Activated naive CD4-positive, alpha-beta T cell treated with anti-CD3 and anti-CD28 coated beads for 36 hours (primary cell): ENCODE measurements at regions of chr19 and their contacts with region 1.

Region 1: DNA sequence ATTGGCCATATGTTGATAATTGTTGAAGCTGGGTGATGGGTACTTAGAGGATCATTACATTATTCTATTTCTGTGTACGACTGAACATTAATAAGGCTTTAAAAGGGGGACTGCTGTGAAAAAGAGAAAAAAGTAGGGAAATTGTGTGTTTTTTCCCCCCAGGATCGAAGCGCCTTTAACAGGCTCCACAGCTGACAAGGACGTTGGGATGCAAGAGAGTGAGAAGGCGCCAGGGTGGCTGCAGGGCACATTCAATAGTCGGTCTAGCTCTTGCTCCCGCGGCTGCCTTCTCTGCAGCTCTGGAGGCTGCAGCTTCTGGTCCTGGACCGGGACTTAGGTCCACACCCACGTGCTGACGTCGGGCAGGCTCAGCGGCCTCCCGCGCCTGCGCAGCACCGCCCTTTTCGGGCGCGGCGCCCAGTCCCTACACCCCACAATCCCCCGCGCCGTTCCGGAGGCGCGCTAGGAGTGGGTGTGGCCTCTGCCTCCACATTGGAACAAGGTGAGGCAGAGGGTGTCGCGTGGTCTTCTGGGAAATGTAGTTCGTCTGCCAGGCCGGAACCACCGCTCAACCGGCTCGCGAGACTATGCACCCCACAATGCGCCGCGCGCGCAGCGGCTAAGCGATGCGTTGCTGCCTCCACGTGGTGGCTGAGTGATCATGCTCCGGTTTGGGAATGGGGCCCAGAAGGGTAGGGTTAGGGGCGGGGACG is 4.9 kb upstream of the LRFN3 start:
- DNase-seq: peak; percentile 100
- H3K4me3 Mint-ChIP-seq: peak overlapping the region; percentile 81
- H3K27ac Mint-ChIP-seq: peak overlapping the region; percentile 93
- H3K4me1 Mint-ChIP-seq: peaks cover 32% of the 10 kb centered on the region
- H3K27me3 Mint-ChIP-seq: no peaks in the 10 kb centered on the region

Region 2: DNA sequence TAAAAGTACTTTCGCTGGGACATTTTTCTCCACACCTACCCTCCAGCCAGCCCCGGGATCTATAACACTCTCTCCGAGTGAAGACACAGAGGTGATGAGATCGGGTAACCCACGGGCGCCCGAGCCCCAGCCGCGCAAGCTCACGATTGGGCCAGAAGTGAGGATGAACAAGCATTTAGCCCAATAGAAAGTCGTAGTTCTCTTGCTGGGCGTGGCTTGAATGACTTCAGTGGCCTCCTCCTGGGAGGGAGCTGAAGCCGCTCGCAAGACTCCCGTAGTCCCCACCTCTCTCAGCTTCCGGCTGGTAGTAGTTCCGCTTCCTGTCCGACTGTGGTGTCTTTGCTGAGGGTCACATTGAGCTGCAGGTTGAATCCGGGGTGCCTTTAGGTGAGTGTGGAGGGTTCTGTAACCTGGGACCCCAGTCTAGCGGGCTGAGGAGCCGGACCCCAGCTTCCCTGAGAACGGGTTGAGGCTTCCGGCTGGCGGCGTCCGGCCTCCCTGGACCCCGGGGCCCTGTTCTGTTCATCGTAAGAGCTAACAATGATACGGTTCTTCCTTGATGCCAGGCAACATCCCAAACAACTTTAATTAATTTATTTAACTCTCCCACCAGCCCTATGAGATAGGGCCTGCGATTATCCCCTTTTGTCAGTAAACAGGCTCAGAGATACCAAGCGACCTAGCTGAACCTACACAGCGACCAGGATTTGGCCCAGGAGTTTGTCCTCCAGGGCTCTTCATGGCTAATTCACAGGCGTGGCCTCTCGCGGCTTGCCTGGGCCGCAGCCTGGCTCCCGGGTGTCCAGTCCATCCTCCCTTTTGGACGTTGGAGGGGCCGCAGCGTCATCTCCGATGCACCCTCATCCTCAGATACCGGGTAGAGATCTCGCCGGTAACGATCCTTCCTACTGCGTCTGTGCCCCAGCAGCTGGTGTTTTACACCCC is 283.0 kb before region 1 on chr19 and contains the start of gene COX6B1:
- CTCF ChIA-PET with region 1: interaction called, 4 read pairs
- intact Hi-C with region 1: loop called (anchors 1 kb)
- DNase-seq: peak; percentile 97
- H3K4me3 Mint-ChIP-seq: peak within 1 kb of the TSS; percentile 87
- H3K27ac Mint-ChIP-seq: peak within 1 kb of the TSS; percentile 91
- H3K4me1 Mint-ChIP-seq: peaks cover 40% of the 10 kb centered on the region
- H3K27me3 Mint-ChIP-seq: no peaks in the 10 kb centered on the region
- total RNA-seq, gene COX6B1: 499 to 512 TPM

Region 3: DNA sequence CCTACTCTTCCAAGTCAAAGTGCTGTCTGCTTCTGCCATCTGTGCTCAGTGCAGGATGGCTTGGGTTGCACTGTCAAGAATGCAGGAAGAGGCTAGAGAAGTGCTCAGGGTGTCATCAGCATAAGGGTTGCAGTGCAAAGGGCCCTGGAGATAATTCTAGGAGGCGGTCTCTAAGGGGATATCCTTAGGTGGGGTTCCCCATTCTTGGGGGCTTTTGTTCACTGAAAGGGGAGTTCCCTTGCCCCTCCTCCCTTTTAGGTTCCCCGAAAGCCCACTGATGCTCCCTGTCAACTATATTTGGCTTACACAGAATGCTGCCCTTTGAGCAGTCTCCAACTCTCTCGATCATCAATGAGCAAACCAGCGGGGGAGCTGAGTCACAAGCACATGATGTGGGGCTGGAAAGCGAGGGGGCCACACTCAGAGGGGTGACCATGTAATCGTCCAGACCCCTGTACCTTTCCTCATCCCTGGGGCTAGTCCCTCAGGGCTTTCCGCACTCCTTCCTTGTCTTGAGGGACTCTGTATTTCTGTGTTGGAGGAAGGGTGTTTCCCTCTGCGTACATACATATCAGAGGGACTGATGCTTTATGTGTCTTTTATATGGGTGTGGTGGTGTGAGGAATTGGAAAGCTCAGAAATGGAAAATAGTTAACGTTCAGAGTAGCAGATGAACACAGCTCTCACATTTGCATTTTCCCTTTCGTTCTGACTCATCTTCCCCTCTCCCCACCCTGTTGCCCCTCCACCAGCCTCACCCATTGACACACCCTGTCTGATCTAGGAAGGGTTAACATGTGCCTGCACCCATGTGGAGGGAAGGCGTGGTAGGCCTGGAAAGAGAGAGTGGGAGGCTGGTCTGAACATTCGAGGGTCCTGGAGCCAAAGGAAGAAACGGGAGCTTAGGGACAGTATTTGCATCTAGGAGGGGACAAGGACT is 220.3 kb before region 1 on chr19:
- CTCF ChIA-PET with region 1: no interaction called
- intact Hi-C with region 1: loop called (anchors 1 kb)
- DNase-seq: peak; percentile 87
- H3K4me3 Mint-ChIP-seq: peak overlapping the region; percentile 52
- H3K27ac Mint-ChIP-seq: peak overlapping the region; percentile 100
- H3K4me1 Mint-ChIP-seq: peaks cover 44% of the 10 kb centered on the region
- H3K27me3 Mint-ChIP-seq: no peaks in the 10 kb centered on the region

Region 4: GRCh38 chr19:35748106-35749020 is 183.0 kb before region 1 on chr19 and contains the start of gene LIN37:
- CTCF ChIA-PET with region 1: interaction called, 3 read pairs
- intact Hi-C with region 1: loop called (anchors 1 kb)
- DNase-seq: peak; percentile 100
- H3K4me3 Mint-ChIP-seq: peak within 1 kb of the TSS; percentile 98
- H3K27ac Mint-ChIP-seq: peak within 1 kb of the TSS; percentile 92
- H3K4me1 Mint-ChIP-seq: peaks cover 44% of the 10 kb centered on the region
- H3K27me3 Mint-ChIP-seq: no peaks in the 10 kb centered on the region
- total RNA-seq, gene LIN37: 5.7 to 9.7 TPM

Region 5: DNA sequence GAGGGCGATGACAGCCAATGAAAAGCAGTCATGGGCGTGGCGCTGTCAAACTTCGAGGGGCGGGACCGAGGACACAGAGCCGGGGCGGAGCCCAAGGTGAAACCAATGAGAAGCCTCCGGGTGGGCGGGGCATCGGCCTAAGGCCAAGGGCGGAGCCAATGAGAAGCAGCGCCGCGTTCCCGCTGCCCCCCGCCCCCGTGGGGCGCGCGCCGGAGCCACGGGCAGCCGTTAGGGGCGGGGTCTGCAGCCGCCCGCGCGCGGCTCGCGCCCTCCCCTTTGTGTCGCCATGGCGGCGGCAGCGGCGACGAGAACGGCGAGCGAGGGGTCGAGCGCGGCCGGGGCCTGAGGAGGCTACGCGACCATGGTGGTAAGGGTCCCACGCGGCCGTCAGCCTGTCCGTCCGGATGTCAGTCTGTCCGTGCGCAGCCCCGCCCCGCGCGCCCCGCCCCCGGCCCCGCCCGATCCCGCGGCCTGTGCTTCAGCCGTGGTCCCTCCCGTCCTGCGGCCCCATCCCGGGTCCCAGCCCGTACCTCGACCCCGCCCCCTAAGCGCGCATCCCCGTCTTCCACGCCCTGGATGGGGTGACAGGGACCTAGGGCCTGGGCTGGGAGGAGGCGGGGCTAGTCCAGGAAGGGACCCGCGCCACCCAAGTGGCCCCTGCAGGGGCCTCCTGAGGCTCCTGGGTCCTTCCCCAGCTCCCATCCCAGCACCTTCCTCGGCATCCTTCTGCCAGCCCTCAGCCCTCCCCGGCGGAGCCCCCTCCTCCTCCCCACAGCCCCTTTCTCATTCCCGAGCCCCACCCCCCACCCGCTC is 155.8 kb before region 1 on chr19 and contains the start of gene ARHGAP33:
- CTCF ChIA-PET with region 1: no interaction called
- intact Hi-C with region 1: loop called (anchors 1 kb)
- DNase-seq: peak; percentile 100
- H3K4me3 Mint-ChIP-seq: peak within 1 kb of the TSS; percentile 78
- H3K27ac Mint-ChIP-seq: no peak within 1 kb of the TSS
- H3K4me1 Mint-ChIP-seq: peaks cover 18% of the 10 kb centered on the region
- H3K27me3 Mint-ChIP-seq: no peaks in the 10 kb centered on the region
- total RNA-seq, gene ARHGAP33: 49.5 to 61.6 TPM

Region 6: GRCh38 chr19:36054119-36054732 is 122.9 kb after region 1 on chr19 and contains the start of gene THAP8:
- CTCF ChIA-PET with region 1: no interaction called
- intact Hi-C with region 1: loop called (anchors 1 kb)
- DNase-seq: peak; percentile 100
- H3K4me3 Mint-ChIP-seq: peak within 1 kb of the TSS; percentile 94
- H3K27ac Mint-ChIP-seq: peak within 1 kb of the TSS; percentile 98
- H3K4me1 Mint-ChIP-seq: peaks cover 18% of the 10 kb centered on the region
- H3K27me3 Mint-ChIP-seq: no peaks in the 10 kb centered on the region
- total RNA-seq, gene THAP8: 1.1 to 1.2 TPM